Vagina (tissue), 2 donors: ENCODE measurements at regions of chr7 and their contacts with region 1.

Region 1: GRCh38 chr7:116786791-116787443 is 75.5 kb upstream of the CAPZA2 start:
- DNase-seq: no peak
- H3K4me3 ChIP-seq: no peak overlapping the region
- H3K27ac ChIP-seq: no peak overlapping the region
- H3K4me1 ChIP-seq: peaks cover 3% of the 10 kb centered on the region
- H3K27me3 ChIP-seq: no peaks in the 10 kb centered on the region
- CTCF ChIP-seq: no peak
- POLR2A ChIP-seq: no peak

Region 2: GRCh38 chr7:116478834-116479233 is 308.1 kb before region 1 on chr7:
- intact Hi-C with region 1: no loop called
- DNase-seq: no peak
- H3K4me3 ChIP-seq: no peak overlapping the region
- H3K27ac ChIP-seq: no peak overlapping the region
- H3K4me1 ChIP-seq: peaks cover 7% of the 10 kb centered on the region
- H3K27me3 ChIP-seq: no peaks in the 10 kb centered on the region
- CTCF ChIP-seq: no peak
- POLR2A ChIP-seq: no peak

Region 3: DNA sequence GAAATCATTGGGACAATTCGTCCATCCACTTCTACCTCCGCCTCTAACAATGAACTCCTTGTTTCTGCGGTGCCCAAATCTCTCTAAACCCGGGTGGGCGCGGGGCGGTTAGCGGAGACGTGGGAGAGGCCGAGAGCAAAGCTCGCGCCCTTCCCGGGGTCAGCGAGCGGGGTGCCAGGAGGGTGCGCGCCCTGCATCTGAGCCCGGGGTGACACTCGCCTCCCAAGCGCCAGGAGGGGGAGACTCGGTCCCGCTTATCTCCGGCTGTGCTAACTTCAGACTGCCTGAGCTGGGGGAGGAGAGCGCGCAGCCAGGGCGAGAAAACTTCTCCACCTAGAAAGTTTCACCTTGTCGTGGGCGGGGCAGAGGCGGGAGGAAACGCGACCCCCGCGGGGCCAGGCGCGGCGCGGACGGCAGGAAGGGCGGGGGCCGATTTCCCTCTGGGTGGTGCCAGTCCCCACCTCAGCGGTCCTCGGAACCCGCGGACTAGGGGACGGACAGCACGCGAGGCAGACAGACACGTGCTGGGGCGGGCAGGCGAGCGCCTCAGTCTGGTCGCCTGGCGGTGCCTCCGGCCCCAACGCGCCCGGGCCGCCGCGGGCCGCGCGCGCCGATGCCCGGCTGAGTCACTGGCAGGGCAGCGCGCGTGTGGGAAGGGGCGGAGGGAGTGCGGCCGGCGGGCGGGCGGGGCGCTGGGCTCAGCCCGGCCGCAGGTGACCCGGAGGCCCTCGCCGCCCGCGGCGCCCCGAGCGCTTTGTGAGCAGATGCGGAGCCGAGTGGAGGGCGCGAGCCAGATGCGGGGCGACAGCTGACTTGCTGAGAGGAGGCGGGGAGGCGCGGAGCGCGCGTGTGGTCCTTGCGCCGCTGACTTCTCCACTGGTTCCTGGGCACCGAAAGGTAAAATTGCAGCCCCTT is 115.0 kb before region 1 on chr7 and contains the start of gene MET:
- intact Hi-C with region 1: loop called (anchors 10 kb)
- DNase-seq: no peak
- H3K4me3 ChIP-seq: peak within 1 kb of the TSS; percentile 69 to 71
- H3K27ac ChIP-seq: peak within 1 kb of the TSS; percentile 77
- H3K4me1 ChIP-seq: no peaks in the 10 kb centered on the region
- H3K27me3 ChIP-seq: no peaks in the 10 kb centered on the region
- CTCF ChIP-seq: peak in 2 of 3 experiments; percentile 42 to 70
- POLR2A ChIP-seq: no peak
- total RNA-seq, gene MET: 15.2 TPM

Region 4: DNA sequence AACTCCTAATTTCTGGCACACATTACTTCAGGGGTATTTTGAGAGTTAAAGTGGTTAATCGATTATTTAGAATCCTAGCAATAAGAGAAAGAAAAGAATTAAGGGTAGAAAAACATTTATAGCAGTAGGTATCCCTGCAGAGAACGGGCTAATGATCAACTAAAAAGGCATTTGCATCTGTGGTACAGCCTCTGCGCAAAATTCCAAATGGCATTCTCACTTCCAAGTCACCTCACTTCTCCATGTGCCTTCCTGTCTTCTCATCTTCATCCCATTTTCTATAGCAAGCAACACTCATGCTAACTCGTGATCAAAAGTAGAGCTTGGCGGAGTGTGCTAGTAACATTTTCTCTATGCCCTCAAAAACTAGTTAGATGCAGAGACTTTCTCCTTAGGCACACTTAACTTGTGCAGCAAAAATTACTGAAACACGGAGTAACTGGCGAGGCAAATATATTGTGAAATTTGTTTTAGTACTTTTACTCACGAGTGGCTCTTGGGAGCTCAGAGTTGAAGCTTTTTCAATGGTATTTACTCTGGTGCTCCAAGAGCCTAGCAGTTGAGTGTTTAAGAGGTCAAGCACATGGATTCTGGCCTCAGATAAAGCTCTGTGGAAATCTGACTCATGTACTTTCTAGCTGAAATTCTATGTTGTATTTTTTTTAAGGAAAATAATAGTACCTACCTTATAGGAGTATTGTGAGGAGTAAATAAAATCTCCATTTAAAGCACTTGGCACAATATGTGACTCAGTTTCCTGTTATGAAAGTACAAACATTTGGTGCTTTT is 49.8 kb before region 1 on chr7:
- intact Hi-C with region 1: no loop called
- DNase-seq: no peak
- H3K4me3 ChIP-seq: no peak overlapping the region
- H3K27ac ChIP-seq: no peak overlapping the region
- H3K4me1 ChIP-seq: no peaks in the 10 kb centered on the region
- H3K27me3 ChIP-seq: no peaks in the 10 kb centered on the region
- CTCF ChIP-seq: no peak
- POLR2A ChIP-seq: no peak